CD8-positive, alpha-beta memory T cell (primary cell): ENCODE measurements at regions of chr3 and their contacts with region 1.

Region 1: DNA sequence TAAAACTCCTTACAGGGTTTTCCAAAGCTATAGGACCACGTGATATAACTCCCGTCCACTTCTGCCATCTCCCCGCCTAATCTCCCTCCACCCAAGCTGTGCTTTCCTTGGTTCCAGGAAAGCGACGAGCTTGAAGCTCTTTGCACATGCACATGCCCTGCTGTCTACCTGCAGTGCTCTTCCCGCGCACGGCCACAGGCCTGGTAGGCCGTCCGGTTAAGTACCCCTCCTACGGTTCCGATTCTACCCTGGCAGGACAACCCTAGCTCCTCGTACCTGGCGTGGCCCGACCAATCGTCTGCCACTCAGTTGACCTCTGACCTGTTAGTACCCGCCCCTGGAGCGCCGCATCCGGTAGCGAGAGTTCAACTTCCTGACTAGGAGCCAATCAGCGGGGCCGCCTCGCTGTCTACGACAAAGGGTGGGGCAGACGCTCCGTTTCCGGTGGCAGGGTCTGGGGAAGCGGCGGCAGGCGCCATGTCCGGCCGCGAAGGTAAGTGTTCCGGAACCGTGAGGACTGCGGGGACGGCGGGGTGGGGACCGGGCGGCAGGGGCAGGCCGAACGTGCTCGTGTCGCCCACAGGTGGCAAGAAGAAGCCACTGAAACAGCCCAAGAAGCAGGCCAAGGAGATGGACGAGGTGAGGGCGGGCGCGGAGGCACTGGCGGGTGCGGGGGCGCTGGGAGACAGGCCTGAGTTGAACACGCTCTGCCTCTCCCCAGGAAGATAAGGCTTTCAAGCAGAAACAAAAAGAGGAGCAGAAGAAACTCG is at the starts of genes CCDC51 and TMA7:
- DNase-seq: peak; percentile 96 to 99 (median 97)
- H3K4me3 ChIP-seq: peak within 1 kb of the TSS; percentile 62
- H3K4me3 Mint-ChIP-seq: peak within 1 kb of the TSS; percentile 84 to 99 (median 93)
- H3K27ac ChIP-seq: peak within 1 kb of the TSS; percentile 96
- H3K27ac Mint-ChIP-seq: peak within 1 kb of the TSS in 6 of 8 donors; percentile 96 to 100 (median 100)
- H3K4me1 ChIP-seq: peaks cover 36% of the 10 kb centered on the region
- H3K4me1 Mint-ChIP-seq: peaks cover 28 to 46% (median 31%) of the 10 kb centered on the region in 3 donors
- H3K27me3 ChIP-seq: no peaks in the 10 kb centered on the region
- H3K27me3 Mint-ChIP-seq: no peaks in the 10 kb centered on the region
- total RNA-seq, gene CCDC51: 24.2 to 26.0 TPM
- total RNA-seq, gene TMA7: 420 to 494 TPM

Region 2: GRCh38 chr3:48013288-48013980 is 426.6 kb before region 1 on chr3:
- CTCF ChIA-PET with region 1: no interaction called
- POLR2A ChIA-PET with region 1: no interaction called
- DNase-seq: no peak
- H3K4me3 ChIP-seq: no peak overlapping the region
- H3K4me3 Mint-ChIP-seq: peak overlapping the region in 1 of 7 donors; percentile 19
- H3K27ac ChIP-seq: no peak overlapping the region
- H3K27ac Mint-ChIP-seq: peak overlapping the region in 7 of 8 donors; percentile 2 to 79 (median 43)
- H3K4me1 ChIP-seq: peaks cover 19% of the 10 kb centered on the region
- H3K4me1 Mint-ChIP-seq: peaks cover 34 to 63% (median 62%) of the 10 kb centered on the region in 3 donors
- H3K27me3 ChIP-seq: no peaks in the 10 kb centered on the region
- H3K27me3 Mint-ChIP-seq: no peaks in the 10 kb centered on the region

Region 3: DNA sequence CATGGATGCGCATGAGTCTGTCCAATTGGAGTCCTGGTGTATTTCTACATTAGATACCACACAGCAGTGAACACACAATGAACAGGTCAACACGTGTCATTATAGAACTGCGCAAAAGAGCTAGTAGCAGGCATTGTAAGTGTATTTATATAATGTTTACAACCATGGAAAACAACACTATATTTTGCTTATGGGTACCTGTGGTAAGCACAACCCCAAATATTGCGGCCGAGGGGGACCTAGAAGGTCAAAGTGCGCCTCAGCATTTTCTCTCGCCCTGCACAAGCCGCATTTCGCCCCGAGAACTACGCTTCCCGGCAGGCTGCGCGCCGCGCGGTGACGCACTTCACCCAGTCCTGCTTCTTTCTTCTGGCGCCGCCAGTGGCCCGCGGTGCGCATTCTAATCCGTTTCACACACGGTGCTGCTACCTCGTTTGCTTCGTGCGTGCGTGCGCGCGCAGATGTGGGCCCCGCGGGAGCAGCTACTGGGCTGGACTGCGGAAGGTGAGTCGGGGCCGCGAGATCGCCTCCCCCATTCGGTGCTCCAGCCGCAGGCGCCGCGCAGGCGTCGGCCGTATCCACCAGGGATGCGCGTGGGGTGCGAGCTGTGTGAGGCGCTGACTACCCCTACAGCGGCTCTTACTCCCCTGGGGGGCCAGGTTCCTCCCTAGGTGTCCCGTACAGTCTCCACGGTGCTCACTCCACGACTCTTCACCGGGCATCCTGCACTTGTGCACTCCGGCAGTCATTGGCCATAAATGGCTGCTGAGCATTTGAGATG is 199.1 kb before region 1 on chr3 and contains the start of gene ZNF589:
- CTCF ChIA-PET with region 1: interaction called, 14 read pairs
- POLR2A ChIA-PET with region 1: interaction called, 4 read pairs
- DNase-seq: peak; percentile 89 to 98 (median 90)
- H3K4me3 ChIP-seq: peak within 1 kb of the TSS; percentile 92
- H3K4me3 Mint-ChIP-seq: peak within 1 kb of the TSS; percentile 90 to 96 (median 93)
- H3K27ac ChIP-seq: peak within 1 kb of the TSS; percentile 84
- H3K27ac Mint-ChIP-seq: peak within 1 kb of the TSS; percentile 82 to 98 (median 91)
- H3K4me1 ChIP-seq: peaks cover 20% of the 10 kb centered on the region
- H3K4me1 Mint-ChIP-seq: peaks cover 14 to 33% (median 22%) of the 10 kb centered on the region in 3 donors
- H3K27me3 ChIP-seq: no peaks in the 10 kb centered on the region
- H3K27me3 Mint-ChIP-seq: no peaks in the 10 kb centered on the region
- total RNA-seq, gene ZNF589: 21.8 to 21.9 TPM

Region 4: DNA sequence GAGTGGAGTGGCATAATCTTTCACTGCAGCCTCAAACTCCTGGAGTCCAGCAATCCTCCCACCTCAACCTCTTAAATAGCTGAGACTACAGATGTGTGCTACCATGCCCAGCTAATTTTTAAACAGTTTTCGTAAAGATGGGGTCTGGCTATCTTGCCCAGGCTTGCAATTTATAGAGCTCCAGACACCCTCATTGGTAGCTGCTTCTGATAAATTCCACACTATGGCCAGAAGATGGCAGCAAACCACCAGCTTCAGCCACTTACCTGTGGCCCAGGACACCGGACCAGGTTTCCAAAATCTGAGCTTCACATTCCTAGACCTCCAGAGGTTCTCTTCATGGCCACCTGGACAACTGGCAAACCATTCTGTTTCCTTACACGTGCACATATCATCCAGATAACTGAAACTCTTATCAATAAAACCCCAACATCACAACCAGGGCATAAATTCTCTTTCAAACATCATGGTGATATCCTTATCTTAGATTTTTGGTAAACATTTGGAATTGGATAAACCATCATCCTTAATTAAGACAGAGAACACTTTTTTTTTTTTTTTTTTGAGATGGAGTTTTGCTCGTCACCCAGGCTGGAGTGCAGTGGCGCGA is 39.1 kb before region 1 on chr3:
- CTCF ChIA-PET with region 1: interaction called, 176 read pairs
- POLR2A ChIA-PET with region 1: interaction called, 11 read pairs
- DNase-seq: peak; percentile 36 to 76 (median 64)
- H3K4me3 ChIP-seq: no peak overlapping the region
- H3K4me3 Mint-ChIP-seq: no peak overlapping the region
- H3K27ac ChIP-seq: no peak overlapping the region
- H3K27ac Mint-ChIP-seq: no peak overlapping the region
- H3K4me1 ChIP-seq: no peaks in the 10 kb centered on the region
- H3K4me1 Mint-ChIP-seq: no peaks in the 10 kb centered on the region
- H3K27me3 ChIP-seq: no peaks in the 10 kb centered on the region
- H3K27me3 Mint-ChIP-seq: peaks cover 6 to 15% of the 10 kb centered on the region in 2 donors

Region 5: GRCh38 chr3:48459773-48460516 is 19.9 kb after region 1 on chr3:
- CTCF ChIA-PET with region 1: interaction called, 29 read pairs
- POLR2A ChIA-PET with region 1: interaction called, 4 read pairs
- DNase-seq: no peak
- H3K4me3 ChIP-seq: no peak overlapping the region
- H3K4me3 Mint-ChIP-seq: no peak overlapping the region
- H3K27ac ChIP-seq: no peak overlapping the region
- H3K27ac Mint-ChIP-seq: peak overlapping the region in 1 of 8 donors; percentile 38
- H3K4me1 ChIP-seq: peaks cover under 1% of the 10 kb centered on the region
- H3K4me1 Mint-ChIP-seq: peaks cover 0 to 10% (median 6%) of the 10 kb centered on the region in 3 donors
- H3K27me3 ChIP-seq: no peaks in the 10 kb centered on the region
- H3K27me3 Mint-ChIP-seq: no peaks in the 10 kb centered on the region

Region 6: GRCh38 chr3:48500656-48501055 is 60.7 kb after region 1 on chr3:
- CTCF ChIA-PET with region 1: interaction called, 22 read pairs
- POLR2A ChIA-PET with region 1: interaction called, 8 read pairs
- DNase-seq: no peak
- H3K4me3 ChIP-seq: no peak overlapping the region
- H3K4me3 Mint-ChIP-seq: peak overlapping the region in 1 of 7 donors; percentile 68
- H3K27ac ChIP-seq: no peak overlapping the region
- H3K27ac Mint-ChIP-seq: peak overlapping the region in 6 of 8 donors; percentile 18 to 87 (median 78)
- H3K4me1 ChIP-seq: peaks cover 25% of the 10 kb centered on the region
- H3K4me1 Mint-ChIP-seq: peaks cover 30 to 45% (median 43%) of the 10 kb centered on the region in 3 donors
- H3K27me3 ChIP-seq: no peaks in the 10 kb centered on the region
- H3K27me3 Mint-ChIP-seq: no peaks in the 10 kb centered on the region

Region 7: GRCh38 chr3:48548729-48549705 is 109.0 kb after region 1 on chr3:
- CTCF ChIA-PET with region 1: interaction called, 40 read pairs
- POLR2A ChIA-PET with region 1: no interaction called
- DNase-seq: peak; percentile 66 to 87 (median 75)
- H3K4me3 ChIP-seq: no peak overlapping the region
- H3K4me3 Mint-ChIP-seq: no peak overlapping the region
- H3K27ac ChIP-seq: no peak overlapping the region
- H3K27ac Mint-ChIP-seq: no peak overlapping the region
- H3K4me1 ChIP-seq: peaks cover 9% of the 10 kb centered on the region
- H3K4me1 Mint-ChIP-seq: peaks cover 0 to 3% (median 3%) of the 10 kb centered on the region in 3 donors
- H3K27me3 ChIP-seq: no peaks in the 10 kb centered on the region
- H3K27me3 Mint-ChIP-seq: peaks cover 0 to 3% of the 10 kb centered on the region in 2 donors